Right cardiac atrium (tissue), 5 donors: ENCODE measurements at regions of chr3 and their contacts with region 1.

Region 1: DNA sequence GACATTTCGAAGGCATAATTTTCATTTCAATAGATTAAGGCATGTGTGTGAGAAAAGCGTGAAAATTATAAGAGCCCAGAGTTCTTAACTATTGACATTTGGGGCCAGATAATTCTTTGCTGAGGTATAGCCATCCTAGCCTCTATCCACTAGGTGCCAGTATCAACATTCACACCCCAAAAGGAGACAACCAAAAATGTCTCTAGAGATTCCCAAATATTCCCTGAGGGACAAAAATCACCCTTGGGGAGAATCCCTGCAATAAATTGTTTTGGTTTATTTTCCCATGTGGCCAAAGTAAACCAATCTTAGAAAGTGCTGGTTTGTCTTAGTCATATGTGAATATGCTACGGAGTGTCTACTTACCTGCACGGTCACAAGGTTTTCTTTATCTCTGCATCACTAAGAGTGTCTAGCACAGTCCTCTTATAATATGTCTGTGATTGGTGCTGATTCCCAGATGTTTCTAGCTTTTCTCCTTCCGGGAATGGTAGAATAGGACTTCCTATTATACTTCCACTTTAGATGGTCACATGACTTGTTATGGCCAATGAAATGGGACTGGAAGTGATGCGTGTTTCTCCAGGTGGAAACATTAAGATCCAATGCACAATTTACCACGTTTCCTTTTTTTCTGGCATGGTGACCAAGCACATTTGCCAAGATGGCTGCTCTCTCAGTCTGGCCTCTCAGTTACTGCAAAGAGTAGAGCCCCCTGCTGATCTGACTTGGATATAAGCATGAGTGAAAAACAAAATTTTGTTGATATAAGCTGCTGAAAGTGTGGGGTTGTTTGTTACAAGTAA is 8.0 kb upstream of the KBTBD8 start:
- DNase-seq: no peak
- ATAC-seq: peak in 1 of 2 donors; percentile 47
- H3K4me3 ChIP-seq: no peak overlapping the region
- H3K27ac ChIP-seq: no peak overlapping the region
- H3K4me1 ChIP-seq: no peaks in the 10 kb centered on the region
- H3K27me3 ChIP-seq: no peaks in the 10 kb centered on the region

Region 2: GRCh38 chr3:67037615-67038014 is 47.6 kb after region 1 on chr3:
- intact Hi-C with region 1: loop called (anchors 5 to 10 kb)
- DNase-seq: no peak
- ATAC-seq: peak in 1 of 2 donors; percentile 50
- H3K4me3 ChIP-seq: no peak overlapping the region
- H3K27ac ChIP-seq: no peak overlapping the region
- H3K4me1 ChIP-seq: no peaks in the 10 kb centered on the region
- H3K27me3 ChIP-seq: no peaks in the 10 kb centered on the region